Activated T-helper 1 cell treated with anti-CD3 and anti-CD28 coated beads, Interleukin-12 subunit alpha, Interleukin-12 subunit beta, Interleukin-2, Interleukin-4 antibody, amounts not matched to agents 30 ng/mL and 10 ng/mL and 1 ng/mL, durations not matched to agents 14 hours and 24 hours and 36 hours (primary cell): ENCODE measurements at regions of chr1 and their contacts with region 1.

Region 1: GRCh38 chr1:248807067-248807737 is 18.5 kb downstream of the SH3BP5L start:
- DNase-seq: peak; percentile 25
- H3K4me3 Mint-ChIP-seq: no peak overlapping the region
- H3K27ac Mint-ChIP-seq: no peak overlapping the region
- H3K4me1 Mint-ChIP-seq: peaks cover 10% of the 10 kb centered on the region
- H3K27me3 Mint-ChIP-seq: no peaks in the 10 kb centered on the region

Region 2: GRCh38 chr1:247936415-247936814 is 870.8 kb before region 1 on chr1:
- intact Hi-C with region 1: loop called (anchors 5 kb)
- DNase-seq: no peak
- H3K4me3 Mint-ChIP-seq: no peak overlapping the region
- H3K27ac Mint-ChIP-seq: no peak overlapping the region
- H3K4me1 Mint-ChIP-seq: no peaks in the 10 kb centered on the region
- H3K27me3 Mint-ChIP-seq: peaks cover 4% of the 10 kb centered on the region

Region 3: DNA sequence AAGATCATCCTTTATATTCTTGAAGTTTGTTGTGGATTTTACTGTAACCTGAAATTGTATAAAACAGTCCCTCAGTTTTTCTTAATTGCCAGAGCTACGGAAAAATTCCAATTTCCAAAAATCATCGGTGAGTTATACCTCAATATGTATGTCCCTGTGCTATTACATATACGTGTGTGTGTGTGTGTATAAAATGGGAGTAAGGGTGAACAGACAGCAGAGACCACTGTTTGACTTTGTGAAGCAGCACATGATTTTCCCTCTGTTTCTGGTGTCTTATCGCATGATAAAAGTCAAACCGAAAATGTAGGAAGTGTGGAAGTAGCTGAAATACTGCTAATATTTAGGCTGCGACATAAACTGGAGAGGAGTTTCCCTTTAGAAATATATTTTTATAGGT is 403.2 kb before region 1 on chr1:
- intact Hi-C with region 1: loop called (anchors 1 kb)
- DNase-seq: no peak
- H3K4me3 Mint-ChIP-seq: no peak overlapping the region
- H3K27ac Mint-ChIP-seq: no peak overlapping the region
- H3K4me1 Mint-ChIP-seq: no peaks in the 10 kb centered on the region
- H3K27me3 Mint-ChIP-seq: peaks cover 2% of the 10 kb centered on the region

Region 4: GRCh38 chr1:248622570-248623001 is 184.6 kb before region 1 on chr1:
- intact Hi-C with region 1: loop called (anchors 1 kb)
- DNase-seq: no peak
- H3K4me3 Mint-ChIP-seq: no peak overlapping the region
- H3K27ac Mint-ChIP-seq: no peak overlapping the region
- H3K4me1 Mint-ChIP-seq: peaks cover 9% of the 10 kb centered on the region
- H3K27me3 Mint-ChIP-seq: no peaks in the 10 kb centered on the region

Region 5: DNA sequence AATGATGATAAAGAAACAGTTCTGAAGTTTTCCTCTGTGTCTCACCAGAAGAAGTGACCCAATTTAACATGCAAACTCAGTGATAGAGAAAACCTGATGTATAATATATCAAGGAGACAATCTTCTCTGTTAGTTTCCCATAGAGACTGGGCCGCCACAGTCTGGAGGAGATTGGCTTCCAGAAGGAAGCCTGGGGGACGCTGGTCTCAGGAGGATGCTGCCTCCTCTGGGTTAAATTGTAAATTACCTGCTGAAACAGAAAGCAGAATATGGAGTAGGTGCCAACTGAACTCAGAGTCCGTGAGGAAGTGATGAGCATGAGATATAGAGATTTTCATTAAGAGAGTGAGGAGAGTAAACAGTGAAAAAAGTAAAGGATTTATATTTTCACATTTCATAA is 120.4 kb before region 1 on chr1:
- intact Hi-C with region 1: loop called (anchors 5 kb)
- DNase-seq: no peak
- H3K4me3 Mint-ChIP-seq: no peak overlapping the region
- H3K27ac Mint-ChIP-seq: no peak overlapping the region
- H3K4me1 Mint-ChIP-seq: peaks cover 5% of the 10 kb centered on the region
- H3K27me3 Mint-ChIP-seq: no peaks in the 10 kb centered on the region

Region 6: GRCh38 chr1:248858891-248859889 is 52.0 kb after region 1 on chr1 and contains the start of gene ZNF692:
- intact Hi-C with region 1: no loop called
- DNase-seq: peak; percentile 97
- H3K4me3 Mint-ChIP-seq: peak within 1 kb of the TSS; percentile 96
- H3K27ac Mint-ChIP-seq: peak within 1 kb of the TSS; percentile 97
- H3K4me1 Mint-ChIP-seq: peaks cover 37% of the 10 kb centered on the region
- H3K27me3 Mint-ChIP-seq: no peaks in the 10 kb centered on the region
- total RNA-seq, gene ZNF692: 89.6 and 91.0 TPM in 2 replicates